IMR-90 (cell line): ENCODE measurements at regions of chr17 and their contacts with region 1.

Region 1: GRCh38 chr17:71180801-71181385 is 939.9 kb upstream of the SOX9 start:
- DNase-seq: peak; percentile 52
- ATAC-seq: no peak
- H3K4me3 ChIP-seq: no peak overlapping the region
- H3K27ac ChIP-seq: no peak overlapping the region
- H3K4me1 ChIP-seq: peaks cover 6% of the 10 kb centered on the region
- H3K27me3 ChIP-seq: no peaks in the 10 kb centered on the region
- CTCF ChIP-seq: no peak
- POLR2A ChIP-seq: no peak
- RAD21 ChIP-seq: no peak

Region 2: GRCh38 chr17:71099003-71099714 is 81.7 kb before region 1 on chr17:
- CTCF ChIA-PET with region 1: no interaction called
- POLR2A ChIA-PET with region 1: no interaction called
- dilution Hi-C with region 1: no loop called
- in situ Hi-C with region 1: no loop called
- intact Hi-C with region 1: no loop called
- DNase-seq: no peak
- ATAC-seq: no peak
- H3K4me3 ChIP-seq: no peak overlapping the region
- H3K27ac ChIP-seq: no peak overlapping the region
- H3K4me1 ChIP-seq: no peaks in the 10 kb centered on the region
- H3K27me3 ChIP-seq: no peaks in the 10 kb centered on the region
- CTCF ChIP-seq: no peak
- POLR2A ChIP-seq: no peak
- RAD21 ChIP-seq: no peak

Region 3: GRCh38 chr17:71423871-71424546 is 243.1 kb after region 1 on chr17:
- CTCF ChIA-PET with region 1: no interaction called
- POLR2A ChIA-PET with region 1: no interaction called
- dilution Hi-C with region 1: no loop called
- in situ Hi-C with region 1: no loop called
- intact Hi-C with region 1: loop called (anchors 10 kb)
- DNase-seq: peak; percentile 76
- ATAC-seq: no peak
- H3K4me3 ChIP-seq: no peak overlapping the region
- H3K27ac ChIP-seq: no peak overlapping the region
- H3K4me1 ChIP-seq: peaks cover 2% of the 10 kb centered on the region; the same call in 1 of the 2 replicates
- H3K27me3 ChIP-seq: no peaks in the 10 kb centered on the region
- CTCF ChIP-seq: no peak
- POLR2A ChIP-seq: no peak
- RAD21 ChIP-seq: no peak